Motor neuron (in vitro differentiated cells): ENCODE measurements at regions of chr11 and their contacts with region 1.

Region 1: DNA sequence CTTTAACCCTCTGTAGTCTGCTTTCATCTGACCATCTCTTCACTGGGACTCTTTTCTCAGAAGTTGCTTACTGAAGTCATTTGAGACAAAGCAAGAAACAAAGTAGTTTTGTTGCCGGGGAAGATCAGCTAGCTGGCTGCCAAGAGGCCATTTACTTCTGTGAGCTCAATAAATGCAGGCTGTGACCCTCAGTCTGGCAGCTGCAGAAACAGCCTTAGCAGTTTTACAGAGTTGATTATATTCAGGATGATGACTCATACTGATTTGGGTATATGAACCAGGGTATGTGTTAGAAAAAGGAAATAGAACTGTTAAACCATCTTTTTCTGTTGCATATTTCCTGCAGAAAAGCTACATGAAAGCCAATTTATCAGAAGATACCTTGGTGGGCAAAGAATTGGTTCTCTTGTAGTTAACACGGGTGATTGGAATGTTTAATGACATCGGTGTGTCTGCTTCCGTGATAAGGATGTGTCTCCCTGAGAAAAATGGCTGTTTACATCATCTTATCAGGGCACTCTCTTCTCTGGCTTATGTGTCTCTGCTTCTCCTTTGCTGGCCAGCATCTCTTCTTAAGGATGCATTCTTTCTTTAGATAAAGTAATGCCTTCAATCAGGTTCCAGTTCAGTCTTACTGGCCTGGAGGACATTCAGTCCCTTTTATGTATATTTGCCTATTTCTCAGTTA is 18.5 kb downstream of the FIBIN start:
- ATAC-seq: peak in 7 of 8 experiments; percentile 63 to 97 (median 96)
- H3K4me3 ChIP-seq: peak overlapping the region in 1 of 5 donors; percentile 3
- H3K27ac ChIP-seq: peak overlapping the region in 1 of 2 donors; percentile 12
- H3K4me1 ChIP-seq: peaks cover 17 to 19% of the 10 kb centered on the region in 2 donors

Region 2: GRCh38 chr11:26483108-26483507 is 529.3 kb before region 1 on chr11:
- in situ Hi-C with region 1: no loop called
- ATAC-seq: peak in 2 of 8 experiments; percentile 84 to 85
- H3K4me3 ChIP-seq: no peak overlapping the region
- H3K27ac ChIP-seq: no peak overlapping the region
- H3K4me1 ChIP-seq: no peaks in the 10 kb centered on the region

Region 3: DNA sequence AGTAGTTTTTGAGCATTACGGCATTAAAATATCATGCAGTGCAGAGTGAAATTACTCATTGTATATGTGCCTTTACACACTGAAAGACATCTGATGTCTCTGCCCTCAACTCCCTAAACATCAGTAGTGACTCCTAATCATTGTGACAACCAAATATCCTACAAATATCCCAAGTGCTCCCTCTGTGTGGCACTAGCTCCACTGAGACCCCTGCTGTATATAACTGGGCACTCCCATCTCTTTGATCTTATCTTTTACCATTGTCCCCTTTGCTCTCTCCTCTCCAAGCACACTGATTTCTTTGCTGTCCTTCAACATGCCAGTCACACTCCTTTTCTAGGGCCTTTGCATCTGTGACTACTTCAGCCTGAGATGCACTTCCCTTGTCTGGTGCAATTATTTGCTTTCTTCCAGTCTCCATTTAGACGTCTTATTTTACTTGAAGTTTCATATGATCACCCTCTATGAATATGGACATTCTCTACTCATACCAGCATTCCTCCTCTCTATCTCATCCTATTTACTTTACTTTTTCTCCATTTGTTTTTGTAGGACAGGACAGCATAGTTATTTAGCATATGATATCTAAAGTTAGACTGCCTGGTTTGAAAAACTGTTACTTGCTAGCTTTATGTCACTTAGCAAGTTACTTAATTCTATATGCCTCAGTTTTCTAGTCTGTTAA is 292.9 kb before region 1 on chr11:
- in situ Hi-C with region 1: no loop called
- ATAC-seq: peak in 3 of 8 experiments; percentile 85 to 87 (median 86)
- H3K4me3 ChIP-seq: no peak overlapping the region
- H3K27ac ChIP-seq: no peak overlapping the region
- H3K4me1 ChIP-seq: no peaks in the 10 kb centered on the region

Region 4: DNA sequence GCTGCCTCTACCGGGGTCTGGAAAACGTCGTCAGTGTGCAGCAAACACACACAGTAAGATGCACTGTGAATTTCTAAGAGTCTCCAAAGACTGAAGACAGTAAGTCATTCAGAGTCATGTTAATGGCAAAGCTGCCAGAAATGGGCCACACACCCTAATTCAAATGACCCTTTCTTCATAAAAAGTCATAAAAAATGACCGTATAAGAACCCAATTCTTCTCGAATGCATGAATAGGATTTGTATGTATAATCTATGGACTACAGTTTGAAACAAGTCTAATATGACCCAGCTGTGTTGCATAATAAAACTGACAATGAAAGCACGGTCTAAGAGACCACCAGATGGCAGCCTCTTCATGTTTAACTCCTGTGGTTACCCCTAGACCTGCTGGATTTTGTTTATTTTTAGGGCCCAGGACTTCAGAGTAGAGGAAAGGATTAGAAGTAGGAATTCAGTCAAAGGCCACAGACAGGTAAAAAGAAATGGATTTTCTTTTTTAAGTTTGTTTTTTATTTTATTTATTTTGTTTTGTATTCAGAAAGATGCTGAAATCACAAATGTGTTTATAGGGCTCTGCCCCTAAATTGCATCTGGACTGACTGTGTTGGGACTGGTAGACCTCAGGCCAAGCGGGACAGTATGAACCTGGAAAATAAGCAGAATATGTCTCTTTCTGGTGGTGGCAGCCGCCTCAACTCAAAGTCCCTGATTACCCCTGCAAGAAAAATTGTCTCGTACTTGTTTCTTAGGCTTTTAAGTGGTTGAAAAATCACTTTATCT is 258.5 kb before region 1 on chr11:
- in situ Hi-C with region 1: loop called in 1 of 9 experiments (anchors 25 kb)
- ATAC-seq: peak; percentile 89 to 99 (median 95)
- H3K4me3 ChIP-seq: no peak overlapping the region
- H3K27ac ChIP-seq: no peak overlapping the region
- H3K4me1 ChIP-seq: peaks cover 9 to 23% of the 10 kb centered on the region in 2 donors

Region 5: GRCh38 chr11:26820739-26821138 is 191.6 kb before region 1 on chr11:
- in situ Hi-C with region 1: no loop called
- ATAC-seq: no peak
- H3K4me3 ChIP-seq: no peak overlapping the region
- H3K27ac ChIP-seq: no peak overlapping the region
- H3K4me1 ChIP-seq: no peaks in the 10 kb centered on the region

Region 6: DNA sequence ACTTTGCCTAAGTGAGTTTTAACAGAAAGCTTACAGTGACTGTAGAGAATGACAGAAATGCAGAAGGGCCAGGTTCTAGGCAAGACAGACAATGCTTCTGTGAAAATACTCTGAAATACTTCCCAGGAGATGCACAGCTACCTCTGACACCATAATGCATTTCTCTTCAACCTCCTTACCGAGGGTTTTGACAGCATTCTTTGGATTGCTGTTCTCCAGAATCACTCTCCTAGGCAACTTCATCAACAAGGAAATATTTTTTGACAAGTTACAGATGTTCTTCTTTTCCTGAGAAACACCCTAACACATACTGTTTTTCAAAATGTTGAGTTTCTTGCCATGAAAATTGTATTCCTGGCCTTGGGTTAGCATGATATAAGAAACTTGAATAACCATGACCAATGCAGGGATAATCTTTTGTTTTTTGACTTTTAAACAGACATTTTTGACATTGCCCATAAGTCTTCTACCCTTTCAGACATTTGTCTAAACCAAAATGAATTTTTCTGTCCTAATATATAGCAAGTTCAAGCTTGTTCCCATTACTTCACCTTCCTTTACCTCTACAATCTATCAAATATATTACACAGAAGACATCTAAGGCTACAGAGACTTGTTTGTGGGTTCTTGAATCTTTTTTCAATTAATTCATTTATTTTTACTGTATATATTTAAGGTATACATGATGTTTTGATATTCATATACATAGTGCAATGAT is 242.5 kb after region 1 on chr11:
- in situ Hi-C with region 1: no loop called
- ATAC-seq: peak in 2 of 8 experiments; percentile 77 to 81
- H3K4me3 ChIP-seq: no peak overlapping the region
- H3K27ac ChIP-seq: no peak overlapping the region
- H3K4me1 ChIP-seq: no peaks in the 10 kb centered on the region